ENCODE measurements at regions of chr10 and their contacts with region 1.

Region 1: DNA sequence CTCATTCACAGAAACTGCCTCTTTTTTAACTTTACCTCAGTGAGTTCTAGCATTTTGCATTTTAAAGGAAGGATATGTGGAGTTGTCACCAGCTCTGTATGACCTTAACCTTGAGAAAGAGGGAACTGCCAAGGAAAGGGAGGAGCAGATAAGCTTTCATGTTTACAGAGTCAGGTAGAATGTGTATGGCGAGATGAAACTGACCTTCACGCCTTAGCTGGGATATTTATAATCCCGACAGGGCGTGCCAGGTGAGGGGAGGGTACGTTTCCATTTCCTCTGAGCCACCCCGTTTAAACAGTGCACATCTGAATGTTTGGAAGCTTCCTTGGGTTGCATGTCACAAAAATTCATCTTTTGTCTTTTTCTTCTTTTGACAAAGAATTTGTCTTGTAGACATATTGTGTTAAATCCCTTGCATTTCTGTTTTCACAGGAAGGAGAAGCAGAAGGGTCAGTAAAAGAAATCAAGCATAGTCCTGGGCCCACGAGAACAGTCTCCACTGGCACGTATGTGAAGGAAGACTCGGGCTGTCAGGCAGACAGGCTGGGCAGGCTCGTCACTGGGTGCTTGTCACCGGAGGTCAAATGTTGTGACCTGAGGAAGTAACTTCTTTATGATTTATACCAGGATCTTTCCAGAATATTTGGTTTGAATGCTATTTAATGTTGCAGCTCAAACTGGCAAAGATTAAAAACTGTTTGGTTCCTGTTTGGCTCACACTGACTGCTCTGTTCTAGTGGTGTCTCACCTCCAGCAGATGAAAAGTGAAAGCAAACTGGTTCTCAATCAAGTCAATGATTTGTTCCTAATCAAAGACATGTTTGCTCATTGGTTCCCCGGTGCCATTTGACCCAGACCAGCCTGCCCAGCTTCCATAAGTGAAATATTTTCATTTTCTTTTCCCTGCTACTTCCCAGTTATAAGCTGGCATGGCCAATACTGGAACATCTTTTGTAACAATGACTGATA is 16.2 kb downstream of the OPTN start:
- DNase-seq: peak in 1 of 2 donors; percentile 66
- ATAC-seq: peak; percentile 86 to 88 (median 87)
- H3K4me3 ChIP-seq: no peak overlapping the region
- H3K4me3 Mint-ChIP-seq: peak overlapping the region; percentile 81
- H3K27ac ChIP-seq: peak overlapping the region; percentile 90
- H3K27ac Mint-ChIP-seq: peak overlapping the region; percentile 94
- H3K4me1 ChIP-seq: peaks cover 23% of the 10 kb centered on the region
- H3K4me1 Mint-ChIP-seq: peaks cover 42 to 44% of the 10 kb centered on the region in 2 donors
- H3K27me3 ChIP-seq: no peaks in the 10 kb centered on the region
- H3K27me3 Mint-ChIP-seq: no peaks in the 10 kb centered on the region
- CTCF ChIP-seq: no peak

Region 2: DNA sequence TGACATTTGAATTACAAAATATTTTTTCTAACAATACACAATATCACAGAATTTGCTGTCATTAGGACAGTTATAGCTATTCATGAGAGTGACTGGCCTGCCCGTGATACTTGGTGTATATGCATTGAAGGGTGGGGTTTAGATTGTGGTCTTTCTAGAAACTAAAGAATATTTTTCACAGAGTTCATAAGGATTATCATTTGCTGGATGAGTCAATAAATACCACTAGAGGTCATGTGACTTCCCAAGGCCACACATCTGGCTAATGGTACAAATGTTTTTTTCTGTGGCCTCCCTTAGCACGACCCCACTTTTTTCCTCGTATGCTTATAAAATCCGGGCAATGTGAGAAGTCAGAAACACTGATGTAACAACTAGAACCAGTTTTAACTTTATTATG is 10.9 kb before region 1 on chr10:
- intact Hi-C with region 1: loop called (anchors 1 kb)
- DNase-seq: peak in 1 of 2 donors; percentile 29
- ATAC-seq: no peak
- H3K4me3 ChIP-seq: no peak overlapping the region
- H3K4me3 Mint-ChIP-seq: peak overlapping the region; percentile 61
- H3K27ac ChIP-seq: peak overlapping the region; percentile 28
- H3K27ac Mint-ChIP-seq: peak overlapping the region; percentile 89 to 92
- H3K4me1 ChIP-seq: peaks cover 56% of the 10 kb centered on the region
- H3K4me1 Mint-ChIP-seq: peaks cover 75 to 77% of the 10 kb centered on the region in 2 donors
- H3K27me3 ChIP-seq: no peaks in the 10 kb centered on the region
- H3K27me3 Mint-ChIP-seq: no peaks in the 10 kb centered on the region
- CTCF ChIP-seq: no peak

Measured in natural killer cell (primary cell).